Naive thymus-derived CD4-positive, alpha-beta T cell (primary cell): ENCODE measurements at regions of chr4 and their contacts with region 1.

Region 1: DNA sequence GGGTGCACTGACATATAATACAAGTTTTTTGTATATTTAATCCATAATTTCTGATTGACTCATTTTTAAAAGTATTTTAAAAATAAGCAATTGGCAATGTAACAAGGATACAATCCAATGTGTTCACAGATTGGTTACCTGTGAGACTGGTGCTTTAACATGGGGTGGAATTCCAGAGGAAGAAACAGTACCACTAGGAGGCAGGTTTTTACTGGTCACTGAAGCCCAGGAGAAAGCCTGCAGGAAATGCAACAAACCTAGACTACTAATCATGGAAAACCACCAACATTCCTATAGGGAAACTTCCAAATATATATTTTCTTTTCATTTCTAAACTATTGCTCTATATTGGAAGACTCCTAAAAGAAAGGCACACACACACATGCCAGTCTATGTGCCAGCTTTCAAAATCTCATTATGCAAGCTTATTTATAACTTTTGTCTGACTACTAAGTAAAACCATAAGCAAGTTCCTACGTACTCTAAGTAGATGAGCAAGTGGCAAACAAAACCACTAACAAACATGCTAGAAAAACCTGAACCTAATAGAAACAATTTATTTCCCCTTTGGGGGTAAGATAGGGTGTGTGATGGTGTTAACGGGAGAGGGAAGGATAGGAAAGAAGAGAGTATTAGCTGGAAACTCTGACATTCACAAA is 19.2 kb downstream of the G3BP2 start:
- DNase-seq: no peak
- ATAC-seq: no peak
- H3K4me3 ChIP-seq: no peak overlapping the region
- H3K4me3 Mint-ChIP-seq: peak overlapping the region in 5 of 10 donors; percentile 31 to 61 (median 49)
- H3K27ac ChIP-seq: peak overlapping the region; percentile 82
- H3K27ac Mint-ChIP-seq: peak overlapping the region; percentile 5 to 94 (median 86)
- H3K4me1 ChIP-seq: peaks cover 19 to 36% of the 10 kb centered on the region in 2 donors
- H3K4me1 Mint-ChIP-seq: peaks cover 16 to 66% (median 51%) of the 10 kb centered on the region in 7 donors
- H3K27me3 ChIP-seq: no peaks in the 10 kb centered on the region
- H3K27me3 Mint-ChIP-seq: no peaks in the 10 kb centered on the region

Region 2: GRCh38 chr4:75584067-75584466 is 69.9 kb before region 1 on chr4:
- CTCF ChIA-PET with region 1: no interaction called
- POLR2A ChIA-PET with region 1: no interaction called
- intact Hi-C with region 1: no loop called
- DNase-seq: no peak
- ATAC-seq: no peak
- H3K4me3 ChIP-seq: no peak overlapping the region
- H3K4me3 Mint-ChIP-seq: no peak overlapping the region
- H3K27ac ChIP-seq: no peak overlapping the region
- H3K27ac Mint-ChIP-seq: no peak overlapping the region
- H3K4me1 ChIP-seq: no peaks in the 10 kb centered on the region
- H3K4me1 Mint-ChIP-seq: no peaks in the 10 kb centered on the region
- H3K27me3 ChIP-seq: no peaks in the 10 kb centered on the region
- H3K27me3 Mint-ChIP-seq: peaks cover 6 to 22% (median 15%) of the 10 kb centered on the region in 5 donors

Region 3: DNA sequence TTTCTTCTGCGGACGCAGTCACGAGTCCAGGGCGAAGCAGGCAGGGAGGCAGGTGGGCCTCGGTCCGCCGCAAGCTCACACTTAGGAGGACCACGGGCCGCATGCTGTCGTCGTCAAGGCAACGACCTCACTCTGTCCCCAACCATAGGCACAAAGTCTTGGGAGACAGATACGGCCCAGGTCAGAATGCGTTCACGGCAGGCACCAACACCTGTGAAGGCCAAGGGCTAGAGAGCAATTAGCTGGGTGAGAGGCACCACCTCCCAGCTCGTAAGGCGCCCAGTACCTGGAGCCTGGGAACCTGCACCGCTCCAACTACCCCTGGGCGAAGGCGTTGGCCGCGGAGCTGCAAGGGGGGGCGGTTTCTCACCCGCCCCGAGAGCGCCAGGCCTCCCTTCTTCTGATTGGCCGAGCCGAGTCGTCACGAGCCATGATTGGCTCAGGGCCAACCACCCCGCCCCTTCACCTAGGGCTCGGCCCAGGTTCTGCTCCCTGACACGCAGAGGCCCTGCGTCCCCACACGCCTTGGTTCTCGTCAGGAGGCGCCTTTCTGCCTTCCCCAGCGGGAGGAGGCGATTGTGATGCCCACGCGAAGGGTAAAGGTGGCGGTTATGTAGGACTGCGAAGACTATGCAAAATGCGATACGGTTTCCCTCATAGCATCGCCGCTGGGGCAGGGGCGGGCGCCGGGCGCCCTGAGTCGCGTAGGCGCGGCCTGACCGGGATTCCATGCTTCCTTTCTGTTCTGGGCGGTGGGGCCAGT is 23.6 kb before region 1 on chr4 and contains the start of gene CDKL2:
- CTCF ChIA-PET with region 1: no interaction called
- POLR2A ChIA-PET with region 1: no interaction called
- intact Hi-C with region 1: loop called (anchors 1 kb)
- DNase-seq: peak; percentile 85 to 93 (median 91)
- ATAC-seq: peak; percentile 100
- H3K4me3 ChIP-seq: peak within 1 kb of the TSS; percentile 74
- H3K4me3 Mint-ChIP-seq: peak within 1 kb of the TSS; percentile 88 to 97 (median 94)
- H3K27ac ChIP-seq: peak within 1 kb of the TSS; percentile 73
- H3K27ac Mint-ChIP-seq: peak within 1 kb of the TSS; percentile 66 to 94 (median 86)
- H3K4me1 ChIP-seq: peaks cover 0 to 7% of the 10 kb centered on the region in 2 donors
- H3K4me1 Mint-ChIP-seq: peaks cover 6 to 18% (median 11%) of the 10 kb centered on the region in 7 donors
- H3K27me3 ChIP-seq: no peaks in the 10 kb centered on the region
- H3K27me3 Mint-ChIP-seq: peaks cover 0 to 12% (median 0%) of the 10 kb centered on the region in 5 donors
- total RNA-seq, gene CDKL2: 0.22 to 1.2 (median 0.34) TPM

Region 4: GRCh38 chr4:75637176-75637575 is 16.8 kb before region 1 on chr4:
- CTCF ChIA-PET with region 1: no interaction called
- POLR2A ChIA-PET with region 1: no interaction called
- intact Hi-C with region 1: loop called in 1 of 2 experiments (anchors 2 kb)
- DNase-seq: no peak
- ATAC-seq: no peak
- H3K4me3 ChIP-seq: no peak overlapping the region
- H3K4me3 Mint-ChIP-seq: no peak overlapping the region
- H3K27ac ChIP-seq: no peak overlapping the region
- H3K27ac Mint-ChIP-seq: no peak overlapping the region
- H3K4me1 ChIP-seq: no peaks in the 10 kb centered on the region
- H3K4me1 Mint-ChIP-seq: peaks cover 0 to 6% (median 0%) of the 10 kb centered on the region in 7 donors
- H3K27me3 ChIP-seq: no peaks in the 10 kb centered on the region
- H3K27me3 Mint-ChIP-seq: no peaks in the 10 kb centered on the region

Region 5: DNA sequence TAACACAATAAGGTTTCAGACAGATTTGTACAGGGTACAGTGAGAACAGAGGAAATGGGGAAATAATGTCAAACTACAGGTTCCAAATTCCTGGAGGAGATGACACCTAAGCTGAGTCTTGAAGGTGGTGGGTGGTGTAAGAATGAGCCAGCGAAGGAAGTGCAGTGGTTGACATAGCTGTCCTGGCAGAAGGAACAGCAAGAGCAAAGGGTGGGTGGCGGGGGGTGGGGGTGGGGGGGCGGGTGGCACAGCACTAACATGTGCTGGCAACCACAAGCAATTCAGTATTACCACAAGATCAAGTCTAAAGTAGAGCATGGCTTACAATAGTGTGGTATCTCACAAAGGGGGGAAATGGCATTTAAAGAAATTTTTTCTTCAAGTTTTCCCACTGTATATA is 32.4 kb after region 1 on chr4:
- CTCF ChIA-PET with region 1: no interaction called
- POLR2A ChIA-PET with region 1: no interaction called
- intact Hi-C with region 1: no loop called
- DNase-seq: peak in 6 of 9 donors; percentile 22 to 43 (median 29)
- ATAC-seq: peak; percentile 89
- H3K4me3 ChIP-seq: no peak overlapping the region
- H3K4me3 Mint-ChIP-seq: peak overlapping the region in 7 of 10 donors; percentile 10 to 67 (median 17)
- H3K27ac ChIP-seq: no peak overlapping the region
- H3K27ac Mint-ChIP-seq: peak overlapping the region in 6 of 9 donors; percentile 3 to 93 (median 72)
- H3K4me1 ChIP-seq: peaks cover 18 to 24% of the 10 kb centered on the region in 2 donors
- H3K4me1 Mint-ChIP-seq: peaks cover 10 to 47% (median 31%) of the 10 kb centered on the region in 7 donors
- H3K27me3 ChIP-seq: no peaks in the 10 kb centered on the region
- H3K27me3 Mint-ChIP-seq: no peaks in the 10 kb centered on the region

Region 6: DNA sequence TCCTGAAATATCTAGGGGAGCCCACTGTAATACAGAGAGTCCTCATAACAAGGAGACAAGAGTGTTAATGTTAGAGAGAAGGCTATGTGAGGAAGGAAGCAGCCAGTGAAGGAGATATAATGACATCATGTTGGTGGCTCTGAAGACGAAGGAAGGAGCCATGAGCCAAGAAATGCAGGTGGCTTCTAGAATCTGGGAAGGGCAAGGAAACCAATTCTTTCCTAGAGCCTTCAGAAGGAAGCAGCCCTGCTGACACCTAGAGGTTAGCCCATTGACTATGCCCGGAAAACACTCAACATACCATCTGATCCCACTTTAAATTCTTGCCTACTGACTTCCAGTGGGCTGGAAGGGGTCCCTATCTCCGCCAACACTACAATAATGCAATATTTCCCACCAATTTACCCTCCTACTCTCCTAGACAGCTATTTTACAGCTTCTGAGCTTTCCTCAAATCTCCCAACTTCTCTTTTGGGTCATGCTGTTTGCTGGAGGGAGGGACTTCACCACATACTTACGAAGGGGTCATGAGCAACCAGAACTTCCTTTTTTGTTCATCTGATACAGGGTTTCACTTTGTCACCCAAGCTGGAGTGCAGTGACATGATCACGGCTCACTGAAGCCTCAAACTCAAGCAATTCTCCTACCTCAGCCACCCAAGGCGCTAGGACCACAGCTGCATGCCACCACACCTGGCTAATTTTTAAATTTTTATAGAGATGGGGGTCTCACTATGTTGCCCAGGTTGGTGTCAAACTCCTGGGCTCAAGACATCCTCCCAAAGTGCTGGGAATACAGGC is 44.4 kb after region 1 on chr4:
- CTCF ChIA-PET with region 1: interaction called, 3 read pairs
- POLR2A ChIA-PET with region 1: no interaction called
- intact Hi-C with region 1: loop called in 1 of 2 experiments (anchors 1 kb)
- DNase-seq: peak in 1 of 9 donors; percentile 11
- ATAC-seq: peak; percentile 80
- H3K4me3 ChIP-seq: no peak overlapping the region
- H3K4me3 Mint-ChIP-seq: peak overlapping the region in 5 of 10 donors; percentile 9 to 64 (median 29)
- H3K27ac ChIP-seq: peak overlapping the region; percentile 14
- H3K27ac Mint-ChIP-seq: peak overlapping the region; percentile 4 to 89 (median 67)
- H3K4me1 ChIP-seq: peaks cover 14 to 20% of the 10 kb centered on the region in 2 donors
- H3K4me1 Mint-ChIP-seq: peaks cover 16 to 43% (median 39%) of the 10 kb centered on the region in 7 donors
- H3K27me3 ChIP-seq: no peaks in the 10 kb centered on the region
- H3K27me3 Mint-ChIP-seq: no peaks in the 10 kb centered on the region

Region 7: GRCh38 chr4:75708218-75708691 is 54.3 kb after region 1 on chr4:
- CTCF ChIA-PET with region 1: interaction called, 3 read pairs
- POLR2A ChIA-PET with region 1: interaction called, 3 read pairs
- intact Hi-C with region 1: loop called (anchors 1 kb)
- DNase-seq: peak in 7 of 9 donors; percentile 49 to 72 (median 52)
- ATAC-seq: peak; percentile 93
- H3K4me3 ChIP-seq: no peak overlapping the region
- H3K4me3 Mint-ChIP-seq: no peak overlapping the region
- H3K27ac ChIP-seq: no peak overlapping the region
- H3K27ac Mint-ChIP-seq: peak overlapping the region in 7 of 9 donors; percentile 19 to 81 (median 56)
- H3K4me1 ChIP-seq: no peaks in the 10 kb centered on the region
- H3K4me1 Mint-ChIP-seq: peaks cover 0 to 13% (median 5%) of the 10 kb centered on the region in 7 donors
- H3K27me3 ChIP-seq: no peaks in the 10 kb centered on the region
- H3K27me3 Mint-ChIP-seq: no peaks in the 10 kb centered on the region

Region 8: DNA sequence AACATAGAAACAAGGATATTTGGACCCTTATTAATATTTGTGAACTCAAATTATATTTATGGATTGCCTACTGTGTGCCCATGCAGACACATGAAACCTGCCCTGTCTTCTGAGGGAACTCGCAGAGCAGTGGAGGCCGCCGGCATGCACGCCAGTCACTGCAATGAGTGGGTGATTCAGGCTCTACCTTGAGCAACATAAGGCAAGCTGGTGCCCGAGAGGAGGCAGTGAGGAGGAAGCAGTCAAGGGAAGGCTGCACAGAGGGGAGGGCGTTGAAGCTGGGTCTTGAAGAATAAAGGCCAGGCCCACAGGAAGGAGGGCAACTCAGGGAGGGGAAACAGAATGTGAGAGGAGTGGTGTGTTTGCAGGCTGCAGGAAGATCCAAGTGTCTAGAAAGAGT is 195.5 kb after region 1 on chr4:
- CTCF ChIA-PET with region 1: no interaction called
- POLR2A ChIA-PET with region 1: no interaction called
- intact Hi-C with region 1: loop called in 1 of 2 experiments (anchors 1 kb)
- DNase-seq: no peak
- ATAC-seq: peak; percentile 42
- H3K4me3 ChIP-seq: no peak overlapping the region
- H3K4me3 Mint-ChIP-seq: no peak overlapping the region
- H3K27ac ChIP-seq: no peak overlapping the region
- H3K27ac Mint-ChIP-seq: peak overlapping the region in 1 of 9 donors; percentile 80
- H3K4me1 ChIP-seq: no peaks in the 10 kb centered on the region
- H3K4me1 Mint-ChIP-seq: peaks cover 0 to 19% (median 0%) of the 10 kb centered on the region in 7 donors
- H3K27me3 ChIP-seq: no peaks in the 10 kb centered on the region
- H3K27me3 Mint-ChIP-seq: peaks cover 5 to 13% (median 6%) of the 10 kb centered on the region in 5 donors